SK-N-SH (cell line): ENCODE measurements at regions of chr15 and their contacts with region 1.

Region 1: DNA sequence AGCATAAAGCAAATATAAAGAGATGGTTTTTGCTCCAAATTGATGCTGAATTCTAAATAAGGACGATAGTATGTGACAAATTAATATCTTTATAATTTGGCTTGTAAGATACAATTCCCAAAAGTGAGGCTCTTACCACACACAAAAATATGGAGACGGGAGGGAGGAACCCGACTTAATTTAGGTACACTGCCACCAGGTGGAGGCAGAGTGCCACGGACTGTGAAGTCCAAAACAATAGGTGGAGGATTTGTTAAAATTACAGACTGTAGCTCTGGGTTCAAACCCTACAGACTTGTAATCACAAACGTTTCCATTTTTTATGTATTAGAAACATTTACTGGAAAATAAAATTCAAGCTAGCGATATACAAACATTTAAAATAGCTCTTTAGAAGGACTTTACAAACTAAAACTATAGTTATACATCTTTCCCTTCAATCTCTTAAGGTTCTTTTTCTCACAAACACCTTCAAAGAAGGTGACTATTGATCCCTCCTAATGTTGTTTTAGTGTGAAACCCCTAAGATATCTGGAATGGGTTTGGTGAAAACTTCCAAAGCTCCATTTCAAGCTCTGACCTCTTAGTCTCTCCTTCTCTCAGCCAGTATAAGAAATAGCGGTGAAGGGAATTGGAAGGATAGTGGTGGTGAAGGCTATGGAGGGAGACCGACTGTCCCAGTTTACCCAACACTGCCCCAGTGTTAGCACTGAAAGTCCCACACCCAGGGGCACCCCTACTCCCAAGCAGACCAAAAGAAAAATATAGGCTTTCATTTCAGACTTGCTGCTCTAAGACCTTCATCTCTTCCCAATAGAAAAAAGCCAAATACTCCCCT is 89.7 kb downstream of the AQP9 start:
- DNase-seq: peak; percentile 62
- H3K4me3 ChIP-seq: no peak overlapping the region; a peak in 1 of 4 replicates
- H3K27ac ChIP-seq: no peak overlapping the region
- H3K4me1 ChIP-seq: peaks cover 4 to 20% of the 10 kb centered on the region in 2 experiments; a peak in 2 of 4 replicates
- H3K27me3 ChIP-seq: no peaks in the 10 kb centered on the region
- CTCF ChIP-seq: peak; percentile 96
- EP300 ChIP-seq: no peak
- RAD21 ChIP-seq: peak; percentile 98

Region 2: GRCh38 chr15:58241872-58242271 is 13.9 kb after region 1 on chr15:
- CTCF ChIA-PET with region 1: interaction called, 16 read pairs
- POLR2A ChIA-PET with region 1: no interaction called
- DNase-seq: no peak
- H3K4me3 ChIP-seq: no peak overlapping the region
- H3K27ac ChIP-seq: no peak overlapping the region
- H3K4me1 ChIP-seq: peaks cover 0 to 8% of the 10 kb centered on the region in 2 experiments; a peak in 1 of 4 replicates
- H3K27me3 ChIP-seq: no peaks in the 10 kb centered on the region
- CTCF ChIP-seq: no peak
- EP300 ChIP-seq: no peak
- RAD21 ChIP-seq: no peak

Region 3: GRCh38 chr15:58247855-58248766 is 20.2 kb after region 1 on chr15:
- CTCF ChIA-PET with region 1: interaction called, 16 read pairs
- POLR2A ChIA-PET with region 1: no interaction called
- DNase-seq: no peak
- H3K4me3 ChIP-seq: no peak overlapping the region
- H3K27ac ChIP-seq: no peak overlapping the region
- H3K4me1 ChIP-seq: peaks cover 0 to 21% of the 10 kb centered on the region in 2 experiments; a peak in 2 of 4 replicates
- H3K27me3 ChIP-seq: no peaks in the 10 kb centered on the region; the same call in 1 of the 2 replicates
- CTCF ChIP-seq: no peak
- EP300 ChIP-seq: no peak
- RAD21 ChIP-seq: no peak

Region 4: DNA sequence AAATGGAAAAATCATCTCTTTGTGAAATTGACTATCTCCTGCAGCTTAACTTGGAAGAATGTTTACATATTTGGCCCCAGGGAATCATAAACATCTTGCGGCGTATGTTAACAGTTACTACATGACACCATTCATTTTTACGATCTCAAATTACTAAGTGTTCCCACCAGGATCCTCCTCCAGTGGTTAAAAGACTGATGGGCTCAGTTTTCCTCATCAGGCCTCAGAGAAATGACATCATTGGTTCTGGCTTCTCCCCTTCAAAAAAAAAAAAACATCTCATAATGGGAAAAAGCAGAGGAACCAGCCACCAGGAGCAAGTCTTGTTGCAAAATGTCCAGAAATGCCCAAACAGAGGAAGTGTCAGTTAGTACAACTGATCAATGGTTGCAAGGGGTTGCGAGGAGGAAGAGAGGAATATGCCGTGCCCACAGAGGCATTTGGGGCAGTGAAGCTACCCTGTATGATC is 133.4 kb after region 1 on chr15:
- CTCF ChIA-PET with region 1: no interaction called
- POLR2A ChIA-PET with region 1: no interaction called
- DNase-seq: no peak
- H3K4me3 ChIP-seq: no peak overlapping the region
- H3K27ac ChIP-seq: no peak overlapping the region
- H3K4me1 ChIP-seq: no peaks in the 10 kb centered on the region; a peak in 1 of 4 replicates
- H3K27me3 ChIP-seq: no peaks in the 10 kb centered on the region; the same call in 1 of the 2 replicates
- CTCF ChIP-seq: no peak
- EP300 ChIP-seq: no peak
- RAD21 ChIP-seq: no peak

Region 5: DNA sequence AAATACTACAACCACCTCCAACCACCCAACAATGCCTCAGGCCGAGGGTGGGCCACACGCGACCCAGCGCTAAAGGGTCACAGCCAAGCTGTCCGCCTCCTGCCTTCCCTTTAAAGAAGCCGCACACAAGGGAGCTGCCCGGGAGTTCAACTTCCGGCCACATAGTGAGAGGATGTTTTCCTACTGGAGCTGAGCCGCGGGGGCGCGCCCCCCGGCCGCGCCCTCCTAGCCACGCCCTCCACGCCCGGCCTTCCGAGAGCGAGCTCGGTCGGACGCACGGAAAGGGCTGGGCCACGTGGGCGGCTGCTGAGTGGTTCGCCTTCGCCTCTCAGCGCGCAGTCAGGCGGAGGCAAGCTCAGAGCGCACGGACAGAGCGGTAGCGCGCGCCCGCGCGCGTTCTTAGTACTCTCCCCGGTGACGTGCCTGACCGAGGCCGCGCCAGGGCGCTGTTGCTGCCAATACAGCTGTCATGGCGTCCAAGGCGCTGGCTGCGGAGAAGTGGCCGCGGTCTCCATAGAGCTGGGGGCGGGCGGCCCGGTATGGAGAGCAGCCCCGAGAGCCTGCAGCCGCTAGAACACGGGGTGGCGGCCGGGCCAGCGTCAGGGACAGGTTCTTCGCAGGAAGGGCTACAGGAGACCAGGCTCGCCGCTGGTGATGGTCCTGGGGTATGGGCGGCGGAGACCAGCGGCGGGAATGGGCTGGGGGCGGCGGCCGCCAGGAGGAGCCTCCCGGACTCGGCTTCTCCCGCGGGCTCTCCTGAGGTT is 543.1 kb after region 1 on chr15 and contains the start of gene MINDY2:
- CTCF ChIA-PET with region 1: interaction called, 13 read pairs
- POLR2A ChIA-PET with region 1: interaction called, 4 read pairs
- DNase-seq: peak; percentile 95
- H3K4me3 ChIP-seq: peak within 1 kb of the TSS; percentile 95
- H3K27ac ChIP-seq: peak within 1 kb of the TSS; percentile 91 to 97
- H3K4me1 ChIP-seq: peaks cover 2 to 7% of the 10 kb centered on the region in 2 experiments; a peak in 3 of 4 replicates
- H3K27me3 ChIP-seq: no peaks in the 10 kb centered on the region
- CTCF ChIP-seq: peak; percentile 44
- EP300 ChIP-seq: no peak; a peak in 1 of 4 replicates
- RAD21 ChIP-seq: no peak
- polyA plus RNA-seq, gene MINDY2: 1.0 and 1.5 TPM in 2 replicates